Left ventricle myocardium inferior (tissue), 1 donor: ENCODE measurements at regions of chr7 and their contacts with region 1.

Region 1: DNA sequence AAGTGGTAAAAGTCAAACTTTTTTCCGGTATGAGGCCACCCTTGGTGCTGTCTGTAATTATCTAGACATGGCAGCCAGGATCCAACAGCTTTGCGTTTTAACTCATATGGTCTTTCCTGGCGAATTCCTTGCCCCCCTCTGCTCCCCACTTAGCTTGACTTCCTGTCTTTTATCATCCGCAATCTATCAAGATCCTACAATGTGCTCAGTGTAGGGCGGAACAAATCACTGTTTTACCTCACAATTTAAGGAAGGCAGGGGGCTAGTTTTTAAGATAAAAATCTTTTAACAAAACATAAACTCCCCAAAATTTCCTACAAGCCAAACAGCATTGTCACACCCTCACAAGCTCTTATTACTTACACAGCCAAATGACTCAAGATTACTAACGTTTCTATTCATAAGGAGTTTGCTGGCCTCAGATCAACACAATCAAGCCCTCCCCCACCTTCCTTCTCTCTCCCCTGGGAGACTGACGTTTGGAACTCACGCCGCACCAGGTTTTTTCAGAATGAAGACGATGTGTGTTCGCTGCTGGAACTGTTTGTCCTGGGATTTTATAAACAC is 1.3 kb upstream of the CDK14 start:
- DNase-seq: peak; percentile 39
- H3K4me3 ChIP-seq: peak overlapping the region; percentile 86
- H3K27ac ChIP-seq: peak overlapping the region; percentile 91
- H3K4me1 ChIP-seq: peaks cover 45% of the 10 kb centered on the region
- H3K27me3 ChIP-seq: no peaks in the 10 kb centered on the region
- CTCF ChIP-seq: no peak

Region 2: GRCh38 chr7:90346336-90347125 is 248.3 kb before region 1 on chr7 and contains the start of gene GTPBP10:
- intact Hi-C with region 1: no loop called
- DNase-seq: peak; percentile 93
- H3K4me3 ChIP-seq: peak within 1 kb of the TSS; percentile 86
- H3K27ac ChIP-seq: peak within 1 kb of the TSS; percentile 86
- H3K4me1 ChIP-seq: peaks cover 22% of the 10 kb centered on the region
- H3K27me3 ChIP-seq: no peaks in the 10 kb centered on the region
- CTCF ChIP-seq: peak; percentile 76
- total RNA-seq, gene GTPBP10: 24.2 TPM

Region 3: GRCh38 chr7:90938371-90938770 is 343.5 kb after region 1 on chr7:
- intact Hi-C with region 1: loop called (anchors 5 kb)
- DNase-seq: no peak
- H3K4me3 ChIP-seq: no peak overlapping the region
- H3K27ac ChIP-seq: no peak overlapping the region
- H3K4me1 ChIP-seq: no peaks in the 10 kb centered on the region
- H3K27me3 ChIP-seq: no peaks in the 10 kb centered on the region
- CTCF ChIP-seq: no peak